ENCODE measurements at regions of chr3 and their contacts with region 1.

Region 1: GRCh38 chr3:85576091-85576690 is 617.4 kb downstream of the CADM2 start:
- DNase-seq: peak; percentile 56
- H3K4me3 ChIP-seq: no peak overlapping the region
- H3K27ac ChIP-seq: no peak overlapping the region
- H3K4me1 ChIP-seq: no peaks in the 10 kb centered on the region
- H3K27me3 ChIP-seq: no peaks in the 10 kb centered on the region

Region 2: GRCh38 chr3:84547971-84548970 is 1027.9 kb before region 1 on chr3:
- in situ Hi-C with region 1: loop called (anchors 10 kb)
- DNase-seq: peak; percentile 60
- H3K4me3 ChIP-seq: peak overlapping the region; percentile 64
- H3K27ac ChIP-seq: no peak overlapping the region
- H3K4me1 ChIP-seq: no peaks in the 10 kb centered on the region
- H3K27me3 ChIP-seq: no peaks in the 10 kb centered on the region

Measured in GM23248 (cell line).